IMR-90 (cell line): ENCODE measurements at regions of chr19 and their contacts with region 1.

Region 1: DNA sequence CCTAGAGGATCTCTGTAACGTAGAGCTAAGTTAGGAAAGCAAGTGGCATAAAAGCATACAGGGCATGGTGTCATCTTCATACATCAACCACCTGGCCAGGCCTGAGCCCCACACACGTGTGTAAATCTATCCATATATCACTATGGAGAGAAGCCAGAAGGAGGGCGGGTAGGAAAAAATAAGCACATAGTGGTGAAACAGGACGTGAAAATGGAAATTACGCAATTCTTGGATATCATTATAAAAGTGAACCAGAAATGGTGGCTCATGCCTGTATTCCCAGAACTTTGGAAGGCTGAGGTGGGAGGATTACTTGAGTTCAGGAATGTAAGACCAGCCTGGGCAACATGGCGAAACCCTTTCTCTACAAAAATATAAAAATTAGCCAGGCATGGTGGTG is 43.4 kb downstream of the PDCD5 start:
- DNase-seq: no peak
- ATAC-seq: no peak
- H3K4me3 ChIP-seq: no peak overlapping the region
- H3K27ac ChIP-seq: no peak overlapping the region
- H3K4me1 ChIP-seq: no peaks in the 10 kb centered on the region
- H3K27me3 ChIP-seq: no peaks in the 10 kb centered on the region
- CTCF ChIP-seq: no peak
- POLR2A ChIP-seq: no peak
- RAD21 ChIP-seq: no peak

Region 2: DNA sequence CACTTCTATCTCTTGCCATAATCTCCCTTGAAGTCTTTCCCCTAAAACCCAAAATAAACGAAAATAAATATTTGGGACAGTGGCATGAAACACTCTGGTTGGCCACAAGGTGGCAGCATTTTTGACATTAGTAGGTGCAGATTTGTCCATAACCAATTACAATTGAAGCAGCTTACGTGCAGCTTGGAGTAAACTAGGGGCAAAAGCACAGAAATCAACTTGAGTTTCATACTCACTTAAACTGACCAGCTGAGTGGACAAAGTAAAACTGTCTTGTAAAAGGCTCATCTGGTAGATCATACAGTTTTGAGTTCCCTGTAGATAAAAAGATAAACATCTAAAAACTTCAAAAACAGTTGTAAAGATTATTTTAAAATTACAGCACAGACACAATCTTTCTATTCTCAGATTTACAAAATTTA is 24.7 kb before region 1 on chr19:
- CTCF ChIA-PET with region 1: no interaction called
- POLR2A ChIA-PET with region 1: no interaction called
- dilution Hi-C with region 1: no loop called
- in situ Hi-C with region 1: no loop called
- intact Hi-C with region 1: no loop called
- DNase-seq: peak; percentile 69
- ATAC-seq: peak; percentile 82
- H3K4me3 ChIP-seq: no peak overlapping the region
- H3K27ac ChIP-seq: no peak overlapping the region
- H3K4me1 ChIP-seq: no peaks in the 10 kb centered on the region
- H3K27me3 ChIP-seq: no peaks in the 10 kb centered on the region
- CTCF ChIP-seq: peak; percentile 70
- POLR2A ChIP-seq: no peak
- RAD21 ChIP-seq: 0 out of 2 replicates have a peak, but pooled peaks have one; percentile 17

Region 3: DNA sequence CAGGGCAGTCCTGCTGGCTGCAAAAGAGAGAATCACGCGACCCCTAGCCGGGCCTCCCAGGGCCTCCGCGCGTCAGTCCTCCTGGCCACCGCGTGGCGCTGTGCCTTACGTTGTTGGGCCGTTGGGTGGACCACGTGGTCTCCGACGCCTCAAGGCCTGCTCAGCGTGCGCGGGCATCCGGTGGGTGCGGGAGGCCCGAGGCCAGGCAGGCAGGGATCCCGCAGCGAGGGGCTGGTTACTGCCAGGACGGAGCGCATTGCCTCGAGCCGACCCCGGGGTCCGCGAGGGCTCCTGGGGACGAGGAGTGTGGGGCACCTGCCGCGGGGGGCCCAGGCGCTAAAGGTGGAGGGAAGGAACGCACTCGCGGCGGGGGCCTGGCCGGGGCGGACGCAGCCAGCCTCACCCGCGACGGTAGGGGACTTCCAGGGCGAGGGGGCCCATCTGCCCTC is 95.2 kb after region 1 on chr19 and contains the start of gene TDRD12:
- CTCF ChIA-PET with region 1: no interaction called
- POLR2A ChIA-PET with region 1: no interaction called
- dilution Hi-C with region 1: no loop called
- in situ Hi-C with region 1: no loop called
- intact Hi-C with region 1: no loop called
- DNase-seq: no peak
- ATAC-seq: no peak
- H3K4me3 ChIP-seq: no peak within 1 kb of the TSS
- H3K27ac ChIP-seq: no peak within 1 kb of the TSS
- H3K4me1 ChIP-seq: no peaks in the 10 kb centered on the region
- H3K27me3 ChIP-seq: no peaks in the 10 kb centered on the region
- CTCF ChIP-seq: no peak
- POLR2A ChIP-seq: no peak
- RAD21 ChIP-seq: no peak
- total RNA-seq, gene TDRD12: under 0.01 TPM in 2 replicates

Region 4: DNA sequence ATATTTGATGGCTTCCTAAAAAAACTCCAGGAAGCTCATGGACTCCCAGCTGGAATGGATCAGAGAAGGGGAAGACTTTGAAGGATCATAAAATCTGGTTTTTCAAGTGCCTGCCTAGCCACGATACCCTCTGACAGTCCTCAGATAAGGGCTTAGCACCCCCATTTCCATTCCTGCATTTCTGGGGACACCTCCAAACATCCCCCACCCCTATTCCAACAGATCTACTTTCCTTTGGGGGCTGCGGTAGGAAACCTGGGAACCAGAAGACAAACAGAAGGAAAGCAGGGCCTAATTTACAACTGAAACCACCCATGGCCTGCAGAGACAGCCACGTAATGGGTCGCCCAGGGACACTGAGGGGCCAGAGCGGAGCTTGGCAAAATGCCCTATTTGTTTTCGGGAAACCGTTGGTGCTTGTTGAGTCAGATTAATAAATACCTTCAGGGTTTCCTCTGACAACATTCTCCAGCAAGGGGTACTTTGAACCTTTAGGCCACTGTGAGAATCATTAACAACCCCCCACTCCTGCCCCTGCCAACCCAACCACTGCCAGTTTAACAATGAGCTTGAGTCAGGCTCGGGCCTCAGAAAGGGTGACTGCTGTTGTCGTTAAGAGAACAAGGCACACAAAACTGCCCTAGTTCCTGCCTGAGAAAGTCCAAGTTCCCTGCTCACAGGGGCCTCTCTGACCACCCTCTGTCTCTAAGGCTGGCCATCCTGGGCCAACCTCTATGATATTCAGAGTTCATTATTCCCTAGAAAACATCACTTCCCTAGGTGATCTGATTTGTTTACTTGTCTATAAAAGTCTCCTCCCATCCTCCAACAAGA is 416.8 kb after region 1 on chr19:
- CTCF ChIA-PET with region 1: no interaction called
- POLR2A ChIA-PET with region 1: interaction called, 10 read pairs
- dilution Hi-C with region 1: no loop called
- in situ Hi-C with region 1: no loop called
- intact Hi-C with region 1: no loop called
- DNase-seq: no peak
- ATAC-seq: no peak
- H3K4me3 ChIP-seq: no peak overlapping the region
- H3K27ac ChIP-seq: no peak overlapping the region
- H3K4me1 ChIP-seq: no peaks in the 10 kb centered on the region
- H3K27me3 ChIP-seq: no peaks in the 10 kb centered on the region
- CTCF ChIP-seq: no peak
- POLR2A ChIP-seq: no peak
- RAD21 ChIP-seq: no peak